ENCODE measurements at regions of chr5 and their contacts with region 1.

Region 1: GRCh38 chr5:81165493-81166119 is 67.5 kb upstream of the CKMT2 start:
- DNase-seq: no peak
- ATAC-seq: peak; percentile 92
- H3K4me3 ChIP-seq: no peak overlapping the region
- H3K27ac ChIP-seq: no peak overlapping the region
- H3K4me1 ChIP-seq: peaks cover 12% of the 10 kb centered on the region
- H3K27me3 ChIP-seq: 0 out of 4 replicates have a peak, but pooled peaks cover 0 to 1% of the 10 kb centered on the region in 2 experiments
- CTCF ChIP-seq: peak; percentile 86 to 94 (median 92)
- EP300 ChIP-seq: no peak
- POLR2A ChIP-seq: no peak
- RAD21 ChIP-seq: peak; percentile 92

Region 2: GRCh38 chr5:80686757-80687156 is 478.8 kb before region 1 on chr5:
- CTCF ChIA-PET with region 1: interaction called, 24 read pairs
- POLR2A ChIA-PET with region 1: no interaction called
- RAD21 ChIA-PET with region 1: interaction called, 11 read pairs
- SMC1A ChIA-PET with region 1: interaction called, 13 read pairs
- in situ Hi-C with region 1: no loop called
- intact Hi-C with region 1: loop called (anchors 2 kb)
- DNase-seq: no peak
- ATAC-seq: no peak
- H3K4me3 ChIP-seq: no peak overlapping the region
- H3K27ac ChIP-seq: no peak overlapping the region
- H3K4me1 ChIP-seq: no peaks in the 10 kb centered on the region
- H3K27me3 ChIP-seq: no peaks in the 10 kb centered on the region
- CTCF ChIP-seq: no peak; a peak in 1 of 6 replicates
- EP300 ChIP-seq: no peak
- POLR2A ChIP-seq: no peak
- RAD21 ChIP-seq: peak; percentile 40

Region 3: GRCh38 chr5:80707645-80708044 is 458.0 kb before region 1 on chr5:
- CTCF ChIA-PET with region 1: interaction called, 4 read pairs
- POLR2A ChIA-PET with region 1: no interaction called
- RAD21 ChIA-PET with region 1: no interaction called
- SMC1A ChIA-PET with region 1: interaction called, 4 read pairs
- in situ Hi-C with region 1: loop called (anchors 10 kb)
- intact Hi-C with region 1: no loop called
- DNase-seq: no peak
- ATAC-seq: no peak
- H3K4me3 ChIP-seq: no peak overlapping the region
- H3K27ac ChIP-seq: no peak overlapping the region
- H3K4me1 ChIP-seq: no peaks in the 10 kb centered on the region
- H3K27me3 ChIP-seq: no peaks in the 10 kb centered on the region
- CTCF ChIP-seq: no peak
- EP300 ChIP-seq: no peak
- POLR2A ChIP-seq: no peak
- RAD21 ChIP-seq: no peak

Region 4: GRCh38 chr5:80884929-80885328 is 280.7 kb before region 1 on chr5:
- CTCF ChIA-PET with region 1: interaction called, 3 read pairs
- POLR2A ChIA-PET with region 1: no interaction called
- RAD21 ChIA-PET with region 1: no interaction called
- SMC1A ChIA-PET with region 1: no interaction called
- in situ Hi-C with region 1: no loop called
- intact Hi-C with region 1: loop called (anchors 10 kb)
- DNase-seq: no peak
- ATAC-seq: no peak; the same call in 2 of the 3 replicates
- H3K4me3 ChIP-seq: no peak overlapping the region
- H3K27ac ChIP-seq: no peak overlapping the region
- H3K4me1 ChIP-seq: no peaks in the 10 kb centered on the region
- H3K27me3 ChIP-seq: no peaks in the 10 kb centered on the region
- CTCF ChIP-seq: no peak
- EP300 ChIP-seq: no peak
- POLR2A ChIP-seq: no peak
- RAD21 ChIP-seq: no peak

Region 5: GRCh38 chr5:81151546-81151945 is 14.1 kb before region 1 on chr5:
- CTCF ChIA-PET with region 1: interaction called, 13 read pairs
- POLR2A ChIA-PET with region 1: no interaction called
- RAD21 ChIA-PET with region 1: no interaction called
- SMC1A ChIA-PET with region 1: interaction called, 3 read pairs
- in situ Hi-C with region 1: no loop called
- intact Hi-C with region 1: no loop called
- DNase-seq: no peak
- ATAC-seq: no peak
- H3K4me3 ChIP-seq: no peak overlapping the region
- H3K27ac ChIP-seq: no peak overlapping the region
- H3K4me1 ChIP-seq: peaks cover 6% of the 10 kb centered on the region; the same call in 1 of the 2 replicates
- H3K27me3 ChIP-seq: no peaks in the 10 kb centered on the region
- CTCF ChIP-seq: no peak
- EP300 ChIP-seq: no peak
- POLR2A ChIP-seq: no peak
- RAD21 ChIP-seq: no peak

Region 6: GRCh38 chr5:81177061-81177460 is 11.5 kb after region 1 on chr5:
- CTCF ChIA-PET with region 1: interaction called, 19 read pairs
- POLR2A ChIA-PET with region 1: no interaction called
- RAD21 ChIA-PET with region 1: no interaction called
- SMC1A ChIA-PET with region 1: interaction called, 3 read pairs
- in situ Hi-C with region 1: no loop called
- intact Hi-C with region 1: no loop called
- DNase-seq: no peak
- ATAC-seq: no peak
- H3K4me3 ChIP-seq: no peak overlapping the region
- H3K27ac ChIP-seq: no peak overlapping the region
- H3K4me1 ChIP-seq: peaks cover 3% of the 10 kb centered on the region
- H3K27me3 ChIP-seq: no peaks in the 10 kb centered on the region; a peak in 1 of 4 replicates
- CTCF ChIP-seq: no peak
- EP300 ChIP-seq: no peak
- POLR2A ChIP-seq: no peak
- RAD21 ChIP-seq: no peak

Region 7: GRCh38 chr5:81194633-81195333 is 29.2 kb after region 1 on chr5:
- CTCF ChIA-PET with region 1: interaction called, 24 read pairs
- POLR2A ChIA-PET with region 1: no interaction called
- RAD21 ChIA-PET with region 1: interaction called, 4 read pairs
- SMC1A ChIA-PET with region 1: interaction called, 3 read pairs
- in situ Hi-C with region 1: no loop called
- intact Hi-C with region 1: no loop called
- DNase-seq: no peak
- ATAC-seq: peak; percentile 100
- H3K4me3 ChIP-seq: no peak overlapping the region
- H3K27ac ChIP-seq: no peak overlapping the region
- H3K4me1 ChIP-seq: no peaks in the 10 kb centered on the region
- H3K27me3 ChIP-seq: no peaks in the 10 kb centered on the region; a peak in 1 of 4 replicates
- CTCF ChIP-seq: peak; percentile 94 to 97 (median 95)
- EP300 ChIP-seq: no peak
- POLR2A ChIP-seq: no peak
- RAD21 ChIP-seq: peak; percentile 96

Region 8: DNA sequence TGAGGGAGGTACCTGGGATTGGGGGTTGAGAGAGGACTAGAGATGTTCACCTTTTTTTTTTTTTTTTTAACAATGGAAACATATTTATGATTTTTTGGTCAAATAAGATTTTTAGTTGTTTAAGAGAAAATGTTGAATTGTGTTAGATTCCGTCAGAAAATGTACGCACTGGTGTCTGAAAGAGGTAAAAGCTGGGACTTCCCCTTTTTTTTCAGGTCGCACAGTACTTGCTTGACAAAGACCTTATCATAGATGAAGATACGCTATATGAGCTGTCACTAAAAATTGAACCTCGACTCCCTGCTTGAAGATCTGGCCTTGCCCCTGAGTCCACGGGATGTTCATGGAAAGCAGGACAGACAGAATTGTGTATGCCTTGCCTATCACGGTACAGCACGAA is 59.9 kb after region 1 on chr5:
- CTCF ChIA-PET with region 1: no interaction called
- POLR2A ChIA-PET with region 1: no interaction called
- RAD21 ChIA-PET with region 1: no interaction called
- SMC1A ChIA-PET with region 1: no interaction called
- in situ Hi-C with region 1: no loop called
- intact Hi-C with region 1: no loop called
- DNase-seq: no peak
- ATAC-seq: peak; percentile 60
- H3K4me3 ChIP-seq: no peak overlapping the region
- H3K27ac ChIP-seq: no peak overlapping the region
- H3K4me1 ChIP-seq: no peaks in the 10 kb centered on the region
- H3K27me3 ChIP-seq: no peaks in the 10 kb centered on the region
- CTCF ChIP-seq: no peak
- EP300 ChIP-seq: no peak
- POLR2A ChIP-seq: no peak
- RAD21 ChIP-seq: no peak

Measured in GM12878 (cell line).